GM12878 (cell line): ENCODE measurements at regions of chr2 and their contacts with region 1.

Region 1: DNA sequence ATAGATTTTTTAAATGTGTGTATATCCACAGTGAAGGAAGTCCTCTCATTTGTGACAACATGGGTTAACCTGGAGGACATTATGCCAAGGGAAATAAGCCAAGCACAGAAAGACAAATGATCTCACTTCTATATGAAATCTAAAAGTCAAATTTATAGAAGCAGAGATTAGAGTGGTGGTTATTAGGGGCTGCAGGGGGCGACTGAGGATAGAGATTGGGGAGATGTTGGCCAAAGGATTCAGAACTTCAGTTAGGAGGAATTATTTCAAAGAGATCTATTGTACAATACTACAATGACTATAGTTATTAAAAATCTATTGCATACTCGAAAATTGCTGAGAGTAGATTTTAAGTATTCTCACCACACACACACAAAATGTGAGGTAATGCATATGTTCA is 252.4 kb upstream of the SLC39A10 start:
- DNase-seq: no peak
- ATAC-seq: no peak
- H3K4me3 ChIP-seq: no peak overlapping the region
- H3K27ac ChIP-seq: no peak overlapping the region
- H3K4me1 ChIP-seq: no peaks in the 10 kb centered on the region
- H3K27me3 ChIP-seq: no peaks in the 10 kb centered on the region
- CTCF ChIP-seq: no peak; a peak in 1 of 6 replicates
- EP300 ChIP-seq: no peak
- POLR2A ChIP-seq: no peak
- RAD21 ChIP-seq: peak; percentile 38; the same call in 1 of the 2 replicates

Region 2: GRCh38 chr2:195392446-195393336 is 12.0 kb before region 1 on chr2:
- CTCF ChIA-PET with region 1: interaction called, 5 read pairs
- POLR2A ChIA-PET with region 1: interaction called, 11 read pairs
- RAD21 ChIA-PET with region 1: interaction called, 3 read pairs
- SMC1A ChIA-PET with region 1: interaction called, 15 read pairs
- in situ Hi-C with region 1: no loop called
- intact Hi-C with region 1: no loop called
- DNase-seq: peak; percentile 13
- ATAC-seq: peak; percentile 76
- H3K4me3 ChIP-seq: no peak overlapping the region
- H3K27ac ChIP-seq: no peak overlapping the region
- H3K4me1 ChIP-seq: no peaks in the 10 kb centered on the region
- H3K27me3 ChIP-seq: no peaks in the 10 kb centered on the region
- CTCF ChIP-seq: no peak
- EP300 ChIP-seq: no peak
- POLR2A ChIP-seq: no peak
- RAD21 ChIP-seq: no peak